PC-3 (cell line): ENCODE measurements at regions of chr1 and their contacts with region 1.

Region 1: GRCh38 chr1:235971571-235972310 is 93.1 kb downstream of the NID1 start:
- DNase-seq: peak; percentile 87
- ATAC-seq: peak; percentile 87
- H3K4me3 ChIP-seq: peak overlapping the region; percentile 15; the same call in 1 of the 2 replicates
- H3K27ac ChIP-seq: peak overlapping the region; percentile 50
- H3K4me1 ChIP-seq: peaks cover 16% of the 10 kb centered on the region
- H3K27me3 ChIP-seq: no peaks in the 10 kb centered on the region
- CTCF ChIP-seq: peak; percentile 83

Region 2: DNA sequence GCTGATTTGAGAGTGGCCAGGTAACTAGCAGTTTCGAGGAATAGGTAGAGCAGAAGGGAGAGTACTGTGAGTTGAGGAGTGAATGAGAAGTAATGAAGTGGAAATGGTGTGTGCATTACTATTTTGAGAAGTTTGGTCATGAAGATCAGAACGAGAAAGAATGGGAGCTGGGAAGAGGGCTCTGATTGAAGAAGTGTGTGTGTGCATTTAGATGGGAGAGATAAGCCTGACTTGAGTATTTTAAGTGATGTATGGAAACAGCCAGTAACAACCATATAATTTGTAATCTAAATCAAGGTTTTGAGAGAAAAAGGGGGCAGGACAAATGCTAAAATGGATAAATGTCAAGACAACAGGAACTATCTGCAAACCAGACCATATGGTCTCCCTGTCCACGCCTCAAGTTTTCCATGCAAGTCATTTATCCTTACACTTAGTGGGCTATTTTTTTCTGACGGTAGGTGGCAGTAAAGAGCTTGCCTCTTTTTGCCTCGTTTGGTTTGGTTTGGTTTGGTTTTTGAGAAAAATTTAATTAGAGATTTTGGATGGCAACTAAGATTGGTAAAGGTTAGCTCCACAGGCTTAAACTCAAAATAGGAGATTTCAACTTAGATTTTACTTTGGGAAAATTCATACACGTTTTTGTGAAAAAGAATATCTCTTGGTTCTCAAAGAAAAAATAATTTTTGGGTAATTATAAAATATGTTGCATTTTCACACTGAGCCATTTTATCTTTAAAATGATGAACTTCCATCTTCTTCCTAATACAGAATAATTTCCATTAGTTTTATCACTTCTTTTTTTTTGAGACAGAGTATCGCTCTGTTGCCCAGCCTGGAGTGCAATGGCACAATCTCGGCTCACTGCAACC is 458.0 kb before region 1 on chr1:
- CTCF ChIA-PET with region 1: no interaction called
- POLR2A ChIA-PET with region 1: no interaction called
- intact Hi-C with region 1: loop called (anchors 2 kb)
- DNase-seq: peak; percentile 75
- ATAC-seq: peak; percentile 67
- H3K4me3 ChIP-seq: no peak overlapping the region
- H3K27ac ChIP-seq: no peak overlapping the region
- H3K4me1 ChIP-seq: no peaks in the 10 kb centered on the region
- H3K27me3 ChIP-seq: no peaks in the 10 kb centered on the region
- CTCF ChIP-seq: peak; percentile 79

Region 3: DNA sequence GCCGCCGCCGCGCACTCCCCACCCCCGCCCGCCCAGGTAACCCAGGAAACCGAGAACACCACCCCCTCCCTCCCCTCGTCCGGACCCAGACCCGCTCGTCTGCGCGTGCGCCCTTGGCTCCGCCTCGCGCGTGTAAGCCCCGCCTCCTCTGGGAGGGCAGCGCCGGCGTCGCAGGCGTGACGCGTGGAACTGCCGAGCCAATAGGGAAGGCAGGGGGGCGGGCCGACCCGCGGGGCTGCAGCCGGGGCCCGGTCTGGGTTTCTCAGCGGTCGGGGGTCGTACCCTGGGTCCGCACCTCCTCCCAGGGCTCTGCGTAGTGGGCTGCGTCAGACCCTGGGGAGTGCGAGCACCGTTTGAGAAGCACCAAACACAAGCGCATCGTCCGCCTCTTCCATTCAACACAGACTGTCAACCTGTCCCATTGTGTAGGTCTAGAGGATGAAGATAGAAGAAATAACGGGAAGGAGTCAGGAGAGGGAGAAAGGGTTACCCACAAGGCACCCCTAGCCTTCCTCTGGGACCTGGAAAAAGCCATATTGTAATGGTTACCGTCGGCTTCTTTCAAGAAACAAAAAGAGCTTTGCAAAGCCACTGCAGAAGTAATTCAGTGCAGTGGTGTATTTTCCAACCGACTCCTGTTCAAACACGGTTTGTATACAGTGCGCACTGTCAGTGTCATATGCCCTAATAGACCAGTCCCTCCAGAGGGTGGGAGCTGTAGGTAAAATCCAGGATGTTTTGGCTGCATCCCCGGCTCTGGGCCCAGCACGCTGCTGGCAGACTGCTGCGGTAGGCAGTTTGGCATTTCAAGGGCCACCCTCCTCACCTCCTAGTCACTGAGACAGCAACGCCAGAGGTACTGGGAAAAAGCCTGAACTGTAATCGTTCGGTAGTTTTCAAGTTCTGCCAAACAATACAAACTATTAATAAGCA is 104.6 kb before region 1 on chr1:
- CTCF ChIA-PET with region 1: interaction called, 15 read pairs
- POLR2A ChIA-PET with region 1: no interaction called
- intact Hi-C with region 1: loop called (anchors 1 kb)
- DNase-seq: peak; percentile 93
- ATAC-seq: peak; percentile 75
- H3K4me3 ChIP-seq: peak overlapping the region; percentile 88
- H3K27ac ChIP-seq: peak overlapping the region; percentile 4; the same call in 1 of the 2 replicates
- H3K4me1 ChIP-seq: peaks cover 21% of the 10 kb centered on the region
- H3K27me3 ChIP-seq: no peaks in the 10 kb centered on the region
- CTCF ChIP-seq: no peak

Region 4: DNA sequence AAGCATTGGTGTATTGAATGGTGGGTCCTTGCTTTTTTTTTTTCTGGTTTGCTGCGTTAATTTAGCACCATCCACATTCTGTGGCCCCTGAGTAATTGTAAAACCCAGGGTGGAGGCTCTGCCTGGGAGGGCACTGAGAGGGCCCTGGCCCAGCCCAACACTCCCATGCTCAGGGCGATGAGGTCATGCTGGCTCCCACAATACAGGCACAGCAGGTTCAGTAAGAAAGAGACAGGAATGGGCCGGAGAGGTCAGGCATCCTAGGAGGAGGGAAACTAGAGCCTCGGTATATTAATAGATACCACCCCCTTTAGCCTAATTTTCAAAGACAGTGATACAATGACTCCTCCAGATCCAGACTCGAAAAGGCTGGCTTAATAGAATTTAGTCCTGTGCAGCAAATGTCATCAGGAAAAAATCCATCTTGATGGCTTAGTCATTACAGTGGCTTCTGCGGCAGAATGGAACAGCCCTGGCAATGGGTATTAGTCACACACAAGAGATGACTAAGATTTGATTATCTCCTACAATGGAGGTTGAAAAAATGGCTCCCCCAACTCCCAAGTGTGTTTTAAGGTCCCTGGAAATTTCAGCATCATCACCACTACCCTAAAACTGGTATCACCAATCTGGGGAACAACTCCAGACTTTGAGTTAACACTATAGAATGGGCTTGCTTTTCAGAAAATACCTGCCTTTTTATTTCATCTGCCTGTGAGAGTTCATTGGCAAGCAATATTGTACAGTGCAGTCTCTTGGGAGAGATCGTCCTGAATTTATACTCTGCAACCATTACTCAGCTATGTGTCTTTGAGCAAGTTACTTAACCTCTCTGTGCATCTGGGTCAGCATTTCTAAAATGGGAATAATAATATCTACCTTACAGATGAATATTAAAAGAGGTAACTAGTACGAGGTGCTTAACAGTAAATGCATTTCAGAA is 61.1 kb before region 1 on chr1:
- CTCF ChIA-PET with region 1: interaction called, 5 read pairs
- POLR2A ChIA-PET with region 1: interaction called, 3 read pairs
- intact Hi-C with region 1: loop called (anchors 2 kb)
- DNase-seq: peak; percentile 92
- ATAC-seq: peak; percentile 74
- H3K4me3 ChIP-seq: peak overlapping the region; percentile 45
- H3K27ac ChIP-seq: peak overlapping the region; percentile 100
- H3K4me1 ChIP-seq: peaks cover 51% of the 10 kb centered on the region
- H3K27me3 ChIP-seq: no peaks in the 10 kb centered on the region
- CTCF ChIP-seq: no peak

Region 5: GRCh38 chr1:235960809-235961208 is 10.9 kb before region 1 on chr1:
- CTCF ChIA-PET with region 1: interaction called, 20 read pairs
- POLR2A ChIA-PET with region 1: no interaction called
- intact Hi-C with region 1: no loop called
- DNase-seq: no peak
- ATAC-seq: no peak
- H3K4me3 ChIP-seq: no peak overlapping the region
- H3K27ac ChIP-seq: no peak overlapping the region
- H3K4me1 ChIP-seq: no peaks in the 10 kb centered on the region
- H3K27me3 ChIP-seq: no peaks in the 10 kb centered on the region
- CTCF ChIP-seq: no peak